GM12878 (cell line): ENCODE measurements at regions of chr15 and their contacts with region 1.

Region 1: GRCh38 chr15:50876989-50877360 is 31.5 kb upstream of the AP4E1 start:
- DNase-seq: no peak
- ATAC-seq: no peak
- H3K4me3 ChIP-seq: peak overlapping the region; percentile 33; the same call in 1 of the 2 replicates
- H3K27ac ChIP-seq: peak overlapping the region; percentile 53; the same call in 1 of the 2 replicates
- H3K4me1 ChIP-seq: peaks cover 42% of the 10 kb centered on the region
- H3K27me3 ChIP-seq: no peaks in the 10 kb centered on the region
- CTCF ChIP-seq: peak; percentile 95 to 99 (median 96)
- EP300 ChIP-seq: no peak
- POLR2A ChIP-seq: no peak
- RAD21 ChIP-seq: peak; percentile 93

Region 2: GRCh38 chr15:50354838-50355618 is 521.9 kb before region 1 on chr15 and contains the start of gene GABPB1:
- CTCF ChIA-PET with region 1: interaction called, 10 read pairs
- POLR2A ChIA-PET with region 1: no interaction called
- RAD21 ChIA-PET with region 1: no interaction called
- SMC1A ChIA-PET with region 1: no interaction called
- in situ Hi-C with region 1: no loop called
- intact Hi-C with region 1: no loop called
- DNase-seq: peak; percentile 60
- ATAC-seq: peak; percentile 56
- H3K4me3 ChIP-seq: peak within 1 kb of the TSS; percentile 82
- H3K27ac ChIP-seq: peak within 1 kb of the TSS; percentile 91
- H3K4me1 ChIP-seq: peaks cover 10% of the 10 kb centered on the region
- H3K27me3 ChIP-seq: no peaks in the 10 kb centered on the region
- CTCF ChIP-seq: no peak
- EP300 ChIP-seq: no peak
- POLR2A ChIP-seq: peak; percentile 90
- RAD21 ChIP-seq: no peak
- polyA plus RNA-seq, gene GABPB1: 13.9 to 18.2 TPM

Region 3: DNA sequence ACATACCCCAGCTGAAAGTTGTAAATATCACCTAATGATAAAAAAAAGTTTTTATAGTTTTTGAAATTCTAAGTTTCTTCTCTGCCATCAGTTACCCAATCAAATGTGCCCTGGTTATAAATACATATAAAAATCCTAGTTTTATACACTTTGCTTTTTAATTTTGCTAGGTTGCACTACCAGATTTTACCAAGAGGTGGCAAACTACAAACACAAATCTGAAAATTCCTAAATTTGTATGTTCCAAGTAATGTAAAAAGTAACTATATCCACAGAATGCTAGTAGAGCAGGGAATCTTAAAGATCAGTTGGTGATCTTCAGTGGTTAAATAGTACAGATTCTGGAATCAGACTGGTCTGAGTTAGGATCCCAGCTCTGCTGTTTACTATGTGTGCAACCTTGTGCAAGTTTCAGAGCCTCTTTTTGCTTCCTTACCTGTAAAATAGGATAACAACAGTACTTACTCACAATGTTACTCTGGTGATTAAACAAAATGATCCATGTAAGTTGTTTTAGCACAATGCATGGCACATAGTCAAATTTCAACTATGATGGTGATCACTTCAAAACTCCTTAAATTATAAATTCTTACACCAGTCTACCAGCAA is 201.3 kb before region 1 on chr15:
- CTCF ChIA-PET with region 1: interaction called, 32 read pairs
- POLR2A ChIA-PET with region 1: interaction called, 3 read pairs
- RAD21 ChIA-PET with region 1: interaction called, 13 read pairs
- SMC1A ChIA-PET with region 1: interaction called, 28 read pairs
- in situ Hi-C with region 1: no loop called
- intact Hi-C with region 1: loop called (anchors 2 kb)
- DNase-seq: peak; percentile 5
- ATAC-seq: peak; percentile 64
- H3K4me3 ChIP-seq: no peak overlapping the region
- H3K27ac ChIP-seq: no peak overlapping the region
- H3K4me1 ChIP-seq: peaks cover 5% of the 10 kb centered on the region
- H3K27me3 ChIP-seq: no peaks in the 10 kb centered on the region
- CTCF ChIP-seq: peak; percentile 51 to 65 (median 58)
- EP300 ChIP-seq: no peak
- POLR2A ChIP-seq: no peak
- RAD21 ChIP-seq: peak; percentile 58

Region 4: DNA sequence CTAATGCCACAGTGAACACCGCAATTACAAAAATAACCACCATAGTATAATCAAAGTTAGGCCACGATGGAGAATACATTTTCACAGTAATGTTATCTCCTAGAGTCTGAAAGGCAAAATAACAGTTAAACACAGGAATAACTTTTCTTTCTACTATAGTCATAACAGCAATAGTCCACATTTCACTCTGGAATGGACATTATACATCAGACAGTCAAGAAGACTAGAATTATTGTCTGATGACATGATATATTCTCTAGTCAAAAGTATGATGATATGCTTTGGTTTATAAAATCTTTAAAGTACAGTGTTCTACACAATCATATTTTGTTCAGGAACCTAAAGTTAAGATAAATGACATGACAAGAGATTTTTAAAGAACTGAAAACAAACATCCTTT is 129.5 kb before region 1 on chr15:
- CTCF ChIA-PET with region 1: interaction called, 5 read pairs
- POLR2A ChIA-PET with region 1: no interaction called
- RAD21 ChIA-PET with region 1: no interaction called
- SMC1A ChIA-PET with region 1: interaction called, 4 read pairs
- in situ Hi-C with region 1: no loop called
- intact Hi-C with region 1: loop called (anchors 5 kb)
- DNase-seq: no peak
- ATAC-seq: no peak
- H3K4me3 ChIP-seq: no peak overlapping the region
- H3K27ac ChIP-seq: no peak overlapping the region
- H3K4me1 ChIP-seq: no peaks in the 10 kb centered on the region
- H3K27me3 ChIP-seq: no peaks in the 10 kb centered on the region
- CTCF ChIP-seq: no peak
- EP300 ChIP-seq: no peak
- POLR2A ChIP-seq: no peak
- RAD21 ChIP-seq: no peak

Region 5: GRCh38 chr15:50857763-50858162 is 19.2 kb before region 1 on chr15:
- CTCF ChIA-PET with region 1: interaction called, 22 read pairs
- POLR2A ChIA-PET with region 1: no interaction called
- RAD21 ChIA-PET with region 1: no interaction called
- SMC1A ChIA-PET with region 1: interaction called, 10 read pairs
- in situ Hi-C with region 1: no loop called
- intact Hi-C with region 1: no loop called
- DNase-seq: no peak
- ATAC-seq: no peak
- H3K4me3 ChIP-seq: no peak overlapping the region
- H3K27ac ChIP-seq: no peak overlapping the region
- H3K4me1 ChIP-seq: peaks cover 17% of the 10 kb centered on the region
- H3K27me3 ChIP-seq: no peaks in the 10 kb centered on the region
- CTCF ChIP-seq: no peak
- EP300 ChIP-seq: no peak
- POLR2A ChIP-seq: no peak
- RAD21 ChIP-seq: no peak

Region 6: DNA sequence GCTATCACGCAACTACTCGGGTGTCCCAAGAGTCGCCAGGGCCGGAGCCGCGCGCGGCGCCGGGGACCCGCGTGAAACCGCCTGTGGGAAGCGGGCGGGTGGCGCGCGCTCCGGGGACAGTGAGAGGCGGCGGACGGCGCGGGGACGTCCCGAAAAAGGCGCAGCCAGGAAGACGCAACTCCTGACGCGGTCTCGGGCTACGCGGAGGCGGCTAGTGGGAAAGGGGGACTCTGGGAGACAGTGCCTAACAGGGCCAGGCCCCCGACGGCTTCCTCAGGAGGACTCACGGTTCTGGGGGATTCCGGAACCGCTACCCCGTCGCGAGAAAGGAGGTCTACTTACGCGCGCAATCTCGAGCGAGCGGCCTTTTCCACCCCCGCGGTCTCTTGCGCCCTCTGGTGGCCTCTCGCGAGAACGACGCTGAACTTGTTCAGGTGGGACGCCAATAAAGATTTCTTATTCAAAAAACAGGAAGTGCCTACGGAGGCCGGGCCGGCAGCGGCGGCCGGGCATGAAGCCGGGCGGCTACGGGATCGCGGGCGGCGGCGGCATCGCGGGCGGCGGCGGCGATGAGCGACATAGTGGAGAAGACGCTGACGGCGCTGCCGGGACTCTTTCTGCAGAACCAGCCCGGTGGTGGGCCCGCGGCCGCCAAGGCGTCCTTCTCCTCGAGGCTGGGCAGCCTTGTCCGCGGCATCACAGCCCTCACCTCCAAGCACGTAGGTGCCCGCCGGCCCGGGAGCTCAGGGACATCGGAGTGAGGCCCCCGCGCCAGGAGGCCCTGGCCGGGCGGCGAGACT is 31.4 kb after region 1 on chr15 and contains the start of gene AP4E1:
- CTCF ChIA-PET with region 1: interaction called, 27 read pairs
- POLR2A ChIA-PET with region 1: interaction called, 5 read pairs
- RAD21 ChIA-PET with region 1: interaction called, 25 read pairs
- SMC1A ChIA-PET with region 1: interaction called, 33 read pairs
- in situ Hi-C with region 1: no loop called
- intact Hi-C with region 1: loop called (anchors 1 kb)
- DNase-seq: peak; percentile 79
- ATAC-seq: peak; percentile 74
- H3K4me3 ChIP-seq: peak within 1 kb of the TSS; percentile 99
- H3K27ac ChIP-seq: peak within 1 kb of the TSS; percentile 90
- H3K4me1 ChIP-seq: no peaks in the 10 kb centered on the region; the same call in 1 of the 2 replicates
- H3K27me3 ChIP-seq: no peaks in the 10 kb centered on the region
- CTCF ChIP-seq: peak; percentile 92 to 98 (median 96); a peak in 5 of 6 replicates
- EP300 ChIP-seq: peak; percentile 26 to 35; a peak in 1 of 4 replicates
- POLR2A ChIP-seq: peak; percentile 86
- RAD21 ChIP-seq: peak; percentile 95
- polyA plus RNA-seq, gene AP4E1: 1.2 to 1.6 TPM

Region 7: DNA sequence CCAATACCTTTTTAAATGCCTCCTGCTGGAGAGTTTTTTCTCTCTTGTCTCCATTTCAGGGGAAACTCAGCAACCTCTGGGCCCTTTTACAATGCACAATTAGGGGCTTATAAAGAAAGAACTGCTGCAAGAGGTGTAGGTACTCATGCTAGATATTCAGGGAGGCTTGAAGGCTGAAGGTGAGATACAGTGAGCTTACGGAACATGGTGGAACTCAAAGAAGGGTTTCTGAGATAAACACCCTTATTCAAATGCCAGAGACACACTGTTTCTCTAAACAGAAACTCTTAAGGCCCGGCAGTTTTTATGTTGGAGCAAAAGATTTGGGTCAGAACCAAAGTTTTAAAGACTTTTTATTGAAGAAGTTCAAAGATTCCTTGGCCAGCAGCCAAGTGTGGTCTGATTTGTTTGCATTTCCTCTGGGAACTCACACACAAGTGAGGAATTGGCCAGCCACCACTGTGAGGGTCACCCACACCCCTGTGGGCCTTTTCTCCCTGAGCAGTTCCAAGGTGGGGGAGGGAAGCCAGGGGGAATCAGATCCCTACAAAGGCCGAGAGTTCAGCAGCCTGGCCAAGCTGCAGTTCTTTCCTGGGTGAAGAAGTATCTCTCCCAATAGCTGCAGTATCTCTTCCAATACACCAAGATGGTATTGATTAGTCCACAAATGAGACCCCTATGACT is 170.0 kb after region 1 on chr15:
- CTCF ChIA-PET with region 1: no interaction called
- POLR2A ChIA-PET with region 1: no interaction called
- RAD21 ChIA-PET with region 1: no interaction called
- SMC1A ChIA-PET with region 1: no interaction called
- in situ Hi-C with region 1: no loop called
- intact Hi-C with region 1: no loop called
- DNase-seq: no peak
- ATAC-seq: no peak
- H3K4me3 ChIP-seq: no peak overlapping the region
- H3K27ac ChIP-seq: no peak overlapping the region
- H3K4me1 ChIP-seq: peaks cover 8% of the 10 kb centered on the region
- H3K27me3 ChIP-seq: no peaks in the 10 kb centered on the region
- CTCF ChIP-seq: no peak
- EP300 ChIP-seq: no peak
- POLR2A ChIP-seq: no peak
- RAD21 ChIP-seq: no peak